A673 (cell line): ENCODE measurements at regions of chr9 and their contacts with region 1.

Region 1: GRCh38 chr9:136482793-136483588 is at the start of gene SEC16A:
- DNase-seq: peak; percentile 97
- H3K4me3 ChIP-seq: peak within 1 kb of the TSS; percentile 86
- H3K27ac ChIP-seq: peak within 1 kb of the TSS; percentile 100
- H3K4me1 ChIP-seq: peaks cover 17% of the 10 kb centered on the region
- H3K27me3 ChIP-seq: no peaks in the 10 kb centered on the region
- CTCF ChIP-seq: no peak
- total RNA-seq, gene SEC16A: 72.9 and 73.7 TPM in 2 replicates

Region 2: GRCh38 chr9:136625101-136626060 is 142.4 kb after region 1 on chr9:
- CTCF ChIA-PET with region 1: interaction called, 10 read pairs
- POLR2A ChIA-PET with region 1: no interaction called
- intact Hi-C with region 1: no loop called
- DNase-seq: peak; percentile 73
- H3K4me3 ChIP-seq: no peak overlapping the region
- H3K27ac ChIP-seq: no peak overlapping the region
- H3K4me1 ChIP-seq: peaks cover 19% of the 10 kb centered on the region
- H3K27me3 ChIP-seq: no peaks in the 10 kb centered on the region
- CTCF ChIP-seq: peak; percentile 52

Region 3: DNA sequence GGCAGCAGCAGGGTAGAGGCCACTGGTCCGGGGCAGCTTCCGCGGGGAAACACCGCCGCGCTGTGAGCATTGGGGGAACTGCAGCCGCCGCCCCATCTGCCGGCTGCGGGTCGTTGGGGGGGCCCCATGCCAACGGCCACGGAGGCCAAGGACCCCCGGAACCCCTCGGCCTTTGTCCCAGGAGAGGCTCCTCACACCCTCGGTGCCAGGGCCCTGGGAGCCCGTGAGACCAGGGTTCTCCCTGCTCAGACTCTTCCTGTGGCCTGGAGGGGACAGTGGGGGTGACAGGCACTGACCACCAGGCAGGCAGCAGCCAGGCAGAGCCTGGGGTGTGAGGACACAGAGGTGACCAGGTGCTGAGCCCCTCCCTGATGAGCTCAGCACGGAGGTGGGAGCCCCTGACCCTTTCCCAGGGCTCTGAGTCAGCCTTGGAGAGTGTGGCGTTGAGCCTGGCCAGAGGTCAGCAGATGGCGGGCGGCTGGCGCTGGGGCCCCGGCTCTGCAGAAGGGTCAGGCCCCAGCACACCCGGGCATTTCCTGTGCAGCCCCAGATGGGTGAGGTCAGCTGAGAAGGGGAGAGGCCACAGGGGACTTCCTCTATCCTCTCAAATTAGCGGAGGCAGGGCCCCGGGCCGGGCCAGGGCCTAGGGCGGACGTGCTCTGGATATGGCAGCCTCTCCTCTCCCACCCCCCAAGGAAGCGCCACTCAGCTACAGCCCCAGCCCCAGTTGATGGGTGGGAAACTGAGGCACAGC is 161.8 kb after region 1 on chr9:
- CTCF ChIA-PET with region 1: interaction called, 3 read pairs
- POLR2A ChIA-PET with region 1: interaction called, 15 read pairs
- intact Hi-C with region 1: no loop called
- DNase-seq: no peak
- H3K4me3 ChIP-seq: peak overlapping the region; percentile 0
- H3K27ac ChIP-seq: no peak overlapping the region
- H3K4me1 ChIP-seq: peaks cover 12% of the 10 kb centered on the region
- H3K27me3 ChIP-seq: no peaks in the 10 kb centered on the region
- CTCF ChIP-seq: peak; percentile 95